Stomach (tissue), 19 donors: ENCODE measurements at regions of chr16 and their contacts with region 1.

Region 1: GRCh38 chr16:84084570-84085270 is 32.0 kb downstream of the MBTPS1 start:
- DNase-seq: peak; percentile 76 to 90
- H3K4me3 ChIP-seq: no peak overlapping the region
- H3K27ac ChIP-seq: no peak overlapping the region
- H3K4me1 ChIP-seq: peaks cover 0 to 30% (median 4%) of the 10 kb centered on the region in 4 donors
- H3K27me3 ChIP-seq: no peaks in the 10 kb centered on the region
- CTCF ChIP-seq: peak in 5 of 7 experiments; percentile 56 to 73 (median 65)
- EP300 ChIP-seq: no peak
- POLR2A ChIP-seq: no peak

Region 2: GRCh38 chr16:84186685-84187437 is 102.1 kb after region 1 on chr16 and contains the start of gene TAF1C:
- intact Hi-C with region 1: loop called (anchors 5 kb)
- DNase-seq: peak; percentile 97 to 98
- H3K4me3 ChIP-seq: peak within 1 kb of the TSS; percentile 74 to 94 (median 89)
- H3K27ac ChIP-seq: peak within 1 kb of the TSS; percentile 49 to 86 (median 82)
- H3K4me1 ChIP-seq: peaks cover 21 to 34% (median 26%) of the 10 kb centered on the region in 4 donors
- H3K27me3 ChIP-seq: no peaks in the 10 kb centered on the region
- CTCF ChIP-seq: peak in 5 of 7 experiments; percentile 84 to 98 (median 95)
- EP300 ChIP-seq: no peak
- POLR2A ChIP-seq: no peak
- total RNA-seq, gene TAF1C: 18.9 to 377 (median 40.3) TPM

Region 3: DNA sequence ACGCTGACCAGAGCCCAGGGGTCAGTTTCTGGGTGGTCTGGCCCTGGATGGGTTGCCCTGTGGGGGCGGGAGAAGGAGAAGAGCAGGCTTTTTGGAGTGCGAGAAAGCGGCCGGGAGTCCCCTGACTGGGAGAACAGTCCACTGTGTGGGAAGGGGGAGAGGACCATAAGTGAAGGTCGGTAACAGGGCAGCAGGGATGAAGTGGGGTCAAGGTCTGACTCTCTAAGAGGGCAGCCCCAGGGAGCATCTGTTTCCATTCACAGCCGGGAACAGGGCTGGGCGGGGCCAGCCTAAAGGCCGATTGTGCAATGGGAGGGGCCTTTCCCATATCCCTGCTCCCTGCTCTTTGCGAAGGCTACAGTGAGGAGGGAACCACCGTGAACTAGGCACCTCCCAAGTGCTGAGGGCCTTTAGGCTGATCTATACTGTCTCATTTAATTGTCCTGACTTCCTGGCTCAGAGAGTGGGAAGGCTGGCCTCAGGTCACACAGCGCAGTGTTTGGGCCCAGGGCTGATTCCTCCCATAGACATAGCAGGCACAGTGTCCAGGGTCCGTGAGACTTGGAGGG is 199.5 kb after region 1 on chr16:
- intact Hi-C with region 1: no loop called
- DNase-seq: peak; percentile 46 to 82
- H3K4me3 ChIP-seq: no peak overlapping the region
- H3K27ac ChIP-seq: peak overlapping the region; percentile 30 to 83 (median 72)
- H3K4me1 ChIP-seq: peaks cover 5 to 41% (median 17%) of the 10 kb centered on the region in 4 donors
- H3K27me3 ChIP-seq: peaks cover 0 to 10% (median 0%) of the 10 kb centered on the region in 3 donors
- CTCF ChIP-seq: no peak
- EP300 ChIP-seq: no peak
- POLR2A ChIP-seq: no peak

Region 4: DNA sequence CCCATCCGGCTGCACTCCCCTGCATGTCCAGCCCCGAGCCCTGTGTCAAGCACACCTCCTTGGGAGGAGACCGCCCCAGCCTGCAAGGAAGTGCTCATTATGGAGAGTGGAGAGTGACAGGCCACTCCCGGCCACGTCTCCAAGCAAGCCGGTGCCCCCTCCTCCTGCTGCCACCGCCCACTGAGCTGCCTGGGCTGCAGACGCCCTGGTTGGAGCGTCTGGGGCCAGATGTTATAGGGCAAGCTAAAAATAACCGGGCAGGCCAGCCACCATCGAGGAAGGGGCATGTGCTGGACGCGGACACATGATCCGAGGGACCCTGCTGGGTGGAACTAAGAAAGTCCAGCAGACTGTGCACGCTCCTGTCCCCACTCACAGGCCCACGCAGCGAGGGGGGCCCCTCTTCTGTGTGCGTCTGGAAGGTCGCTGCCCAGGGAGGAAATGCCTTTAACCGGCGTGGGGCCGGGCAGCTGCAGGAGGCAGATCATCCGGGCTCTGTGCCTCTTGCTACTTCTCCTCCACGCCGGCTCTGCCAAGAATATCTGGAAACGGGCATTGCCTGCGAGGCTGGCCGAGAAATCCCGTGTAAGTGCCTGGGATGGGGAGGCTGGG is 209.9 kb after region 1 on chr16 and contains the start of gene WFDC1:
- intact Hi-C with region 1: no loop called
- DNase-seq: peak in 1 of 2 donors; percentile 71
- H3K4me3 ChIP-seq: peak within 1 kb of the TSS; percentile 30 to 34 (median 30)
- H3K27ac ChIP-seq: peak within 1 kb of the TSS; percentile 7 to 90 (median 80)
- H3K4me1 ChIP-seq: peaks cover 11 to 57% (median 20%) of the 10 kb centered on the region in 4 donors
- H3K27me3 ChIP-seq: peaks cover 0 to 37% (median 13%) of the 10 kb centered on the region in 3 donors
- CTCF ChIP-seq: no peak
- EP300 ChIP-seq: no peak
- POLR2A ChIP-seq: no peak
- total RNA-seq, gene WFDC1: 10.7 to 64.3 (median 20.8) TPM in 4 of 5 donors, not detected in the other